Naive thymus-derived CD4-positive, alpha-beta T cell (primary cell): ENCODE measurements at regions of chr10 and their contacts with region 1.

Region 1: GRCh38 chr10:74262856-74263255 is 111.8 kb downstream of the ADK start:
- DNase-seq: no peak
- ATAC-seq: no peak
- H3K4me3 ChIP-seq: no peak overlapping the region
- H3K4me3 Mint-ChIP-seq: no peak overlapping the region
- H3K27ac ChIP-seq: no peak overlapping the region
- H3K27ac Mint-ChIP-seq: peak overlapping the region in 1 of 9 donors; percentile 28
- H3K4me1 ChIP-seq: no peaks in the 10 kb centered on the region
- H3K4me1 Mint-ChIP-seq: peaks cover 4 to 24% (median 11%) of the 10 kb centered on the region in 7 donors
- H3K27me3 ChIP-seq: no peaks in the 10 kb centered on the region
- H3K27me3 Mint-ChIP-seq: no peaks in the 10 kb centered on the region

Region 2: DNA sequence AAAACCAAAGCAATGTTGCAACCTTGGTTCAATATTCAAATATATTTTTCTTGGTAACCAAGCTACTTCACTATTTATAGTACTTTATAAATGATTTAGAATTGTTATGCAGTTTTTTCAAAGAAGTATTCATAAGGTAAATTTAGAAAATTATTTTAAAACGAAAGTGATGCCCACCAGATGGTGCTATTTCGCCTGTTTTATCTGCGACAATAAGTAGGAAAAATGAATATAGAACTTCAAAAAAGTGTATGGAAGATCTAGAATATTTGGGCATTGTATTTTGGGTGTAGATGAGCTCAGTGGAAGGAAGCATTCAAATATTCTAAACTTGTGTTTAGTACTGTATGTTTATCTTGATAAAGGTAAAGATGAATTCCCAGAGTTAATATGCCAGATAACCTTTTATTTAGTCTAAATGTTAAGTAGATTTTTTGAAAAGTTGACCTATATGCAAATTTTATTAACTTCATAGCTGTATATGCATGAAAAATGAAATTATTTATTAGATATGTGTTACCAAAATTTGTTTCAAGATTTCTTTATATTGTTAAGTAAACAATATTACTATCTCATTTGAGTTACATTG is 18.7 kb before region 1 on chr10:
- CTCF ChIA-PET with region 1: interaction called, 3 read pairs
- POLR2A ChIA-PET with region 1: no interaction called
- intact Hi-C with region 1: loop called in 1 of 2 experiments (anchors 1 kb)
- DNase-seq: peak in 5 of 9 donors; percentile 5 to 45 (median 34)
- ATAC-seq: no peak
- H3K4me3 ChIP-seq: no peak overlapping the region
- H3K4me3 Mint-ChIP-seq: no peak overlapping the region
- H3K27ac ChIP-seq: no peak overlapping the region
- H3K27ac Mint-ChIP-seq: no peak overlapping the region
- H3K4me1 ChIP-seq: no peaks in the 10 kb centered on the region
- H3K4me1 Mint-ChIP-seq: peaks cover 0 to 2% (median 0%) of the 10 kb centered on the region in 7 donors
- H3K27me3 ChIP-seq: no peaks in the 10 kb centered on the region
- H3K27me3 Mint-ChIP-seq: no peaks in the 10 kb centered on the region

Region 3: DNA sequence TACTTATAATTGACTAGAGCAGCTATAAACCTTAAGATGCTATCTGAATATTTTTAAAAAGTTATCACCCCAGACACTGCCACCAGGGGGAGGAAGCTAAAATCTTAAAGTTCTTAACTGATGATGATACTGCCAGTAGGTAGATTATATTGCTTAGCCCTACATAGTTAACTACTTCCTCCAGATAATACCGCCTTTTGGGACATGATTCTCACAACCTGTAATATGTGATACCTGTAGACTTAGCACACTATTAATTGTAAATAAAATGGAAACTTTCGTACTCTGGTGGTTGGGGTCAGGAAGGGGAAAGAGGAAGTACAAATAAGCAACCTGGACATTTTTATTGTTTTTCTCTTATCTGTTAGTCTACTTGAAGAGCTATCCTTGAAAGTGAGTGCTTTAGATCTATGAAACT is 157.1 kb after region 1 on chr10:
- CTCF ChIA-PET with region 1: no interaction called
- POLR2A ChIA-PET with region 1: no interaction called
- intact Hi-C with region 1: loop called in 1 of 2 experiments (anchors 2 kb)
- DNase-seq: peak in 7 of 9 donors; percentile 15 to 53 (median 48)
- ATAC-seq: peak; percentile 63
- H3K4me3 ChIP-seq: no peak overlapping the region
- H3K4me3 Mint-ChIP-seq: no peak overlapping the region
- H3K27ac ChIP-seq: no peak overlapping the region
- H3K27ac Mint-ChIP-seq: peak overlapping the region in 1 of 9 donors; percentile 57
- H3K4me1 ChIP-seq: no peaks in the 10 kb centered on the region
- H3K4me1 Mint-ChIP-seq: peaks cover 5 to 12% (median 7%) of the 10 kb centered on the region in 7 donors
- H3K27me3 ChIP-seq: no peaks in the 10 kb centered on the region
- H3K27me3 Mint-ChIP-seq: no peaks in the 10 kb centered on the region

Region 4: GRCh38 chr10:74738985-74739567 is 476.2 kb after region 1 on chr10:
- CTCF ChIA-PET with region 1: no interaction called
- POLR2A ChIA-PET with region 1: no interaction called
- intact Hi-C with region 1: loop called in 1 of 2 experiments (anchors 2 kb)
- DNase-seq: peak in 7 of 9 donors; percentile 4 to 40 (median 17)
- ATAC-seq: peak; percentile 73
- H3K4me3 ChIP-seq: no peak overlapping the region
- H3K4me3 Mint-ChIP-seq: peak overlapping the region in 9 of 10 donors; percentile 17 to 56 (median 34)
- H3K27ac ChIP-seq: no peak overlapping the region
- H3K27ac Mint-ChIP-seq: peak overlapping the region; percentile 44 to 87 (median 58)
- H3K4me1 ChIP-seq: peaks cover 7 to 15% of the 10 kb centered on the region in 2 donors
- H3K4me1 Mint-ChIP-seq: peaks cover 15 to 26% (median 17%) of the 10 kb centered on the region in 7 donors
- H3K27me3 ChIP-seq: no peaks in the 10 kb centered on the region
- H3K27me3 Mint-ChIP-seq: no peaks in the 10 kb centered on the region

Region 5: DNA sequence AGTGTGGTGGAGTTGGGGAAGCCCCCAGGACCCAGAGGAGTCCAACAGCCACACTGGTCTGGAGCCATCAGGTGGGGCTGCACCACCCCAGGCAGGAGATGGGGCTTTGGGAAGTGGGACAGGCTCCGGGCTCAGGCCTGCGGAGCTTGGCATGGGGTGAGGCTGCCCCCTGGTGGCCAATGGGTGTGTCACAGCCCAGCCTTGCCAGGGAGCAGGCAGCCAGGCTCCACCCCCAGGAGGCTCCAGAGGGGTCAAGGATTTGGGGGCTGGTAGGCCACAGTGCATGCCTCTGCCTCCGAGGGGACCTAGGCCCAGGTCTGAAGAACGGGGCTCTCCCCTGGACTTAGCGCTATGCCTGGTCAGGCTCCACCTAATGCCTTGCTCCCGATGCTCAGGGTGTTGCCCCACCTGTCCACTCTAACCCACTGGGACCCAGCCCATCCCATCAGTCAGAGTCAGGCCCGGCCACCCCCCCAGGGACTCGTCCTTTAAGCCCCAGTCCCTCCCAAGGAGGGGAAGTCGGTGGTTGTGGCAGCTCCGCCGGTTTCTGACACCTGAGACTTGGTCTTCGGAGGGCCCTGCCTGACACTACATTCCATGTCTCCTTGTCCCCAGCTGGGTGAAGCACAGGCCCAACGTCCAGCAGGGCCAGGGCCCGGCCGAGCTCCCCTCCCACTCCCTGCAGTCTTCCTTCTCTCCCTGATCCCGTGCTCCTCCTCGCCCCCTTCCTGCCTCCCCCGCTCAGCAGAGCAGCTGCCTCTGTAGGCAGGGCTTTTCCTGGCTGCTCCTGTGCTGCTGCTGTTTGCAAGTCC is 837.3 kb after region 1 on chr10:
- CTCF ChIA-PET with region 1: interaction called, 4 read pairs
- POLR2A ChIA-PET with region 1: no interaction called
- intact Hi-C with region 1: loop called (anchors 1 kb)
- DNase-seq: peak; percentile 55 to 88 (median 70)
- ATAC-seq: peak; percentile 95
- H3K4me3 ChIP-seq: no peak overlapping the region
- H3K4me3 Mint-ChIP-seq: no peak overlapping the region
- H3K27ac ChIP-seq: no peak overlapping the region
- H3K27ac Mint-ChIP-seq: no peak overlapping the region
- H3K4me1 ChIP-seq: peaks cover 0 to 3% of the 10 kb centered on the region in 2 donors
- H3K4me1 Mint-ChIP-seq: peaks cover 0 to 7% (median 0%) of the 10 kb centered on the region in 7 donors
- H3K27me3 ChIP-seq: no peaks in the 10 kb centered on the region
- H3K27me3 Mint-ChIP-seq: no peaks in the 10 kb centered on the region